BJ (cell line): ENCODE measurements at regions of chr2 and their contacts with region 1.

Region 1: DNA sequence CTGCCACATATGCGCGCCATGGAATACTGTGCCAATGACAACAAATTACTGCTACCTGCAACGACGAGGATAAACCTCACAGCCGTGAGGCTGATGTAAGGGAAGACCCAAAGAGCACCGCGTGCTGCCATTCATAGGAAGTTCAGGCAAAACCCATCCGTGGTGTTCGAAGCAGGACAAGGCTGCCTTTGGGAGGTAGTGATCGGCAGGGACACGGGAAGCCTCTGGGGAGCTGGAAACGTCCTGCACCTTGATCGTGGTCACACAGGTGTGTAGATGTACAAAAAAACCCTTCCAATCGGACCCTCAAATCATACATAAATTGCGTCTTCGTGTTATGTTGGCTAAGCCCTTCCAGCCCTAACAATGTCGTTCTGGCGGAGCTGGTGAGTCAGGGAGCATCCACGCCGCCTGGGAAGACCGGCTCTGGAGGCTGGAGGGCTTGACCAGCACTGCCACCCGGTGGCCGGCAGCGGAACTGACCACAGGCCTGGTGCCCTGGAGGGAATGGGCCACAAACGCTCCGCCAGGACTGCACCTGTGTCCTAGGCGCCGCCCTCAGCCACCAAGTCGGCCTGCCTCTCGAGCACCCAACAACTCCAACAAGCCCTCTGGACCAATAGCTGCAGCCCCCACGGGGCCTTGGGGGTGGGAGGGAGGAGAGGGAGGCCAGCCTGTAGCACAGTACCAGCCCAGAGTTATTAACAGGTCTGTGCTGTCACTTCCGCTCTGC is 4.1 kb upstream of the NEURL3 start:
- DNase-seq: peak; percentile 16
- H3K4me3 ChIP-seq: no peak overlapping the region
- H3K27me3 ChIP-seq: peaks cover 5% of the 10 kb centered on the region
- CTCF ChIP-seq: peak; percentile 99

Region 2: GRCh38 chr2:96400049-96401000 is 109.0 kb before region 1 on chr2:
- CTCF ChIA-PET with region 1: interaction called, 253 read pairs
- POLR2A ChIA-PET with region 1: no interaction called
- DNase-seq: no peak
- H3K4me3 ChIP-seq: no peak overlapping the region
- H3K27me3 ChIP-seq: peaks cover 9% of the 10 kb centered on the region
- CTCF ChIP-seq: no peak

Region 3: GRCh38 chr2:96413323-96413722 is 96.0 kb before region 1 on chr2:
- CTCF ChIA-PET with region 1: interaction called, 253 read pairs
- POLR2A ChIA-PET with region 1: interaction called, 3 read pairs
- DNase-seq: no peak
- H3K4me3 ChIP-seq: no peak overlapping the region
- H3K27me3 ChIP-seq: peaks cover 3% of the 10 kb centered on the region
- CTCF ChIP-seq: no peak

Region 4: DNA sequence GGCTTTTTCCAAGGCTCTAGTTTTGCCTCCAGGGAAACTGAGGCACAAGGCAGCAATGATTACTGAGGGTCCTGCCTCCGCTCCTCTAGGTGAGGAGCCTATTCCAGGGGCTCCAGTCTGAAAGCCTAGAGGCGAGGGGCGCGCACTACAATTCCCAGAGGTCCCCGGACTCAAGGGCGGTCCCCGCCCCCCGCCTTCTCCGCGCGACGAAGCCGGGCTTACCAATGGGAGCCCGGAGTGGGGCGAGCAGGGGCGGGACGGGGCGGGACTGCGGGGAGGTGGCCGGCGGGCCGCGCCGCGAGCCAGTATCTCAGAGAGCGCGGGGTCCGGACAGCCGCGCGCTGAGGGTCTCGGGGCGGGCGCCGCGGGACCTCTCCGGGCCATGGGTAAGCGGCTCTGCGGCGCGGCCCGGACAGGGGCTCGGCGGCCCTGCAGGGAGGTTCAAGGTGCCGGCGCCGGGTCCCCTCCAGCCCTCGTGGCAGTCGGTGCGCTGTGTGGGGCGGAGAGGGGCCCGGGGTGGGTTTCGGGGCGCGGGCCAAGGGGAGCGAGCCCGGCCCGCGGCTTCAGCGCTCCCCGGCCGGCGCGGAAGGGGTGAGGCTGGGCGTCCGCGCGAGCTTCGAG is 27.3 kb after region 1 on chr2 and contains the start of gene ARID5A:
- CTCF ChIA-PET with region 1: interaction called, 14 read pairs
- POLR2A ChIA-PET with region 1: no interaction called
- DNase-seq: no peak
- H3K4me3 ChIP-seq: peak within 1 kb of the TSS; percentile 70
- H3K27me3 ChIP-seq: no peaks in the 10 kb centered on the region
- CTCF ChIP-seq: peak; percentile 33; the same call in 1 of the 2 replicates
- polyA plus RNA-seq, gene ARID5A: 10.4 and 19.1 TPM in 2 replicates

Region 5: GRCh38 chr2:96602330-96602823 is 93.1 kb after region 1 on chr2:
- CTCF ChIA-PET with region 1: no interaction called
- POLR2A ChIA-PET with region 1: no interaction called
- DNase-seq: no peak
- H3K4me3 ChIP-seq: no peak overlapping the region
- H3K27me3 ChIP-seq: no peaks in the 10 kb centered on the region
- CTCF ChIP-seq: no peak

Region 6: DNA sequence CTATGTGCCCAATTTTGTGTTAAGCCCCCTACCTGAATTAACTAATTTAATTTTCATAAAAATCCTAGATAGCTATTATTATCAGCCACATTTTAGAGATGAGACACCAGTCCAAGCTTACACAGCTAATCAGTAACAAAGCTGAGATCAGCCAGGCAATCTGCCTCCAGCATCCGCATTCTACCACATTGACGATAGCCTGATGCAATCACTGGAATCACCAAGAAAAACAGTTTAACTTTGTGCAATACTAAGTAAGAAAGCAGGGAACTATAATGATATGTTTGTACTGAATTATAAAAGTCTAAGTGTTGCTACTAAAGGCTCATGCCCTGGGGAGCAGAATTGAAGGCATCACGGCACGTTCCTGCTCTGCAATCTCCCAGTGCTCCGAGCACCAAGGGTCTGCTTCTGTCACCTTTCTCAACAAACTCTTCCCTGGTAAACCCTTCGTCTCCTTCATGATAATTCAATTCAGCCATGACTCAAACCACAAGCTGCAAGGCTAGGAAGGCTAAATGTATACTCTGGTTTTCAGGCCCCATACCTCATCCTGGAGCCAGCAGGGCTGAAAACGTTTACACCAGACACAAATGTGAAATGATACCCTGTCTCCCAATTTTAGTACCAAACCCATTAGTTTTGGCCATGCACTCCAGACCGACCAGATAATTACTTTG is 109.5 kb after region 1 on chr2:
- CTCF ChIA-PET with region 1: no interaction called
- POLR2A ChIA-PET with region 1: no interaction called
- DNase-seq: no peak
- H3K4me3 ChIP-seq: no peak overlapping the region
- H3K27me3 ChIP-seq: no peaks in the 10 kb centered on the region
- CTCF ChIP-seq: no peak